ENCODE measurements at regions of chr5 and their contacts with region 1.

Region 1: DNA sequence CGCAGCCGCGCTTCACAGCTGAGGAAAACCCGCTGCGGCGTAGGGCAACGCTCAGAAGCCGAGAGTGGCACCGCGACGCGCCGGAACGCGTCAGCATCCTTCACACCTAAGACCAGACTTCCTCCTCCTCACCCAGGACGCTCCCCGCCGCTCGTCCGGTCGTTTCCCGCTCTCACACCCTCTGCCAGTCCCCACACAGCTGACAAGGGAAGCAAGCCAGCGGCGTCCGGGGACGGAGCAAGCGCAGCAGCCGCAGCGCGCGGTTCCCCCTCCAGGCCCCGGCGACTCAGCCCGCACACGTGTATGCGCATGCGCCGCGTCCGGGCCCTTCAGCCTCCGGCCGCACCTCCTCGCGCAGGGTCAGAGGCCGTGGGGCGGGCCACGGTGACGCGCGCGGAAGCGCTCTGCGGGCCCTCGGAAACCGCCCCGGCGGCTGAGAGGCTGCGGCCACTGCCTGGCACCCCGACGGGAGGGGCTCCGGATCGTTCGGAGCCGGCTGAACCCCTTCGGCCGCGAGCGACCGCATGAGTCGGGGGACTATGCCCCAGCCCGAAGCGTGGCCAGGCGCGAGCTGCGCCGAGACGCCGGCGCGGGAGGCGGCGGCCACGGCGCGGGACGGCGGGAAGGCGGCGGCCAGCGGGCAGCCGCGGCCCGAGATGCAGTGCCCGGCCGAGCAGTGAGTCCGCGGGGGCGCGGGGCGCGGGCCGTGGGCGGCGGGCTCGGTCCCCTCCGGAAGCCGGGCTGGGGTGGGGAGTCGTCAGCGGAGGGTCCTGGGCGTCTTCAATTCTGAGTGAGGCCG is at the start of gene OTULIN:
- DNase-seq: peak; percentile 93
- ATAC-seq: peak; percentile 83
- H3K4me3 Mint-ChIP-seq: peak within 1 kb of the TSS; percentile 95
- H3K27ac Mint-ChIP-seq: peak within 1 kb of the TSS; percentile 97
- H3K4me1 Mint-ChIP-seq: peaks cover 68% of the 10 kb centered on the region
- H3K27me3 Mint-ChIP-seq: no peaks in the 10 kb centered on the region
- total RNA-seq, gene OTULIN: 48.0 to 48.2 TPM

Region 2: DNA sequence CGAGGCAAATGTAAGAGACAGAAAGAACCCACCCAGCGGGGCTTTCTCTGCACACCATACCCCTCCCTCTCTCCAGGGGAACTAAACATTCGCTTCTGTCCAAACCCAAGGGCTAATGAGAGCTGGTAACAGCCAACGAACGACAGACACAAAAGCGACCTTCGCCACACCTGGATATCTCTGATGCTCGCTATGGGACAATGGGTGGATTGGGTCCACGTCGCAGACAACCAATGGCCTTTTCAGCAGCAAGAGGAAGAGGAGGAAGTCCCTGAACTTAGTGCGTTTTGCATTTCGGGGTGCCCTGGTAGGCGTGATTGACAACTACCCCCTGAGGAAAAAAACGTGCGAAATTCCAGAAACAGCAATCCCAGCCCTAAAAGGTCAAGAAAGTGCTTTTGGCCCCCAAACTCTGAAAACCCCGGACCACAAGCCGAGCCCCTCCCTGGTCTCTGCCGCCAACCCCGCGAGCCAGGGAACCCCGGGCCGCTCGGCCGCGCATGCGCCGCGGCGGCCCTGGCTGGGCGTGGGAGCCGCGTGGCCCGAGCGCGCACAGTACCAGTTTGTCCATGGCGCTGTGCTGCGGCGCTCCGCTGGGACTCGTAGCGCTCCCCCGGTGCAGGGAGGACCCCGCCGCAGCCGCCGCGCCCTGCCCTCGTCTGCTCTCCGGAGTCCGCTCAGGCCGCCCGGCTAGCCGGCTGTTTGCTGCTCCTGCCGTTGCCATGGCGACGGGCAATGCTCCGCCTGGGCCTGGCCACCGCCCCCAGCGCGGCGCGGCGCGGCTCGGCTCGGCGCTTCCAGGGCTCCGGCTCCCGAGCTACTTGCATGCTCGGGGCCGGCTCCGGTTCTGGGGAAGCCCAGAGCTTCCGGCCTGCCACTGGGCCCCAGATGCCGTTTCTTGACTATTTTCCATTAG is 653.2 kb before region 1 on chr5:
- CTCF ChIA-PET with region 1: no interaction called
- POLR2A ChIA-PET with region 1: no interaction called
- intact Hi-C with region 1: loop called in 1 of 2 experiments (anchors 10 kb)
- DNase-seq: peak; percentile 77
- ATAC-seq: peak; percentile 95
- H3K4me3 Mint-ChIP-seq: peak overlapping the region; percentile 71
- H3K27ac Mint-ChIP-seq: no peak overlapping the region
- H3K4me1 Mint-ChIP-seq: peaks cover 8% of the 10 kb centered on the region
- H3K27me3 Mint-ChIP-seq: peaks cover 22% of the 10 kb centered on the region

Region 3: GRCh38 chr5:14415024-14415697 is 249.3 kb before region 1 on chr5:
- CTCF ChIA-PET with region 1: no interaction called
- POLR2A ChIA-PET with region 1: no interaction called
- intact Hi-C with region 1: loop called (anchors 1 to 5 kb)
- DNase-seq: peak; percentile 63
- ATAC-seq: peak; percentile 48
- H3K4me3 Mint-ChIP-seq: peak overlapping the region; percentile 44
- H3K27ac Mint-ChIP-seq: peak overlapping the region; percentile 92
- H3K4me1 Mint-ChIP-seq: peaks cover 53% of the 10 kb centered on the region
- H3K27me3 Mint-ChIP-seq: peaks cover 4% of the 10 kb centered on the region

Region 4: GRCh38 chr5:14595189-14595588 is 69.3 kb before region 1 on chr5:
- CTCF ChIA-PET with region 1: no interaction called
- POLR2A ChIA-PET with region 1: no interaction called
- intact Hi-C with region 1: loop called in 1 of 2 experiments (anchors 2 kb)
- DNase-seq: peak; percentile 52
- ATAC-seq: peak; percentile 71
- H3K4me3 Mint-ChIP-seq: peak overlapping the region; percentile 66
- H3K27ac Mint-ChIP-seq: peak overlapping the region; percentile 96
- H3K4me1 Mint-ChIP-seq: peaks cover 85% of the 10 kb centered on the region
- H3K27me3 Mint-ChIP-seq: no peaks in the 10 kb centered on the region

Region 5: GRCh38 chr5:14676320-14676719 is 11.8 kb after region 1 on chr5:
- CTCF ChIA-PET with region 1: interaction called, 12 read pairs
- POLR2A ChIA-PET with region 1: no interaction called
- intact Hi-C with region 1: no loop called
- DNase-seq: peak; percentile 52
- ATAC-seq: peak; percentile 61
- H3K4me3 Mint-ChIP-seq: peak overlapping the region; percentile 38
- H3K27ac Mint-ChIP-seq: peak overlapping the region; percentile 87
- H3K4me1 Mint-ChIP-seq: peaks cover 63% of the 10 kb centered on the region
- H3K27me3 Mint-ChIP-seq: no peaks in the 10 kb centered on the region

Region 6: DNA sequence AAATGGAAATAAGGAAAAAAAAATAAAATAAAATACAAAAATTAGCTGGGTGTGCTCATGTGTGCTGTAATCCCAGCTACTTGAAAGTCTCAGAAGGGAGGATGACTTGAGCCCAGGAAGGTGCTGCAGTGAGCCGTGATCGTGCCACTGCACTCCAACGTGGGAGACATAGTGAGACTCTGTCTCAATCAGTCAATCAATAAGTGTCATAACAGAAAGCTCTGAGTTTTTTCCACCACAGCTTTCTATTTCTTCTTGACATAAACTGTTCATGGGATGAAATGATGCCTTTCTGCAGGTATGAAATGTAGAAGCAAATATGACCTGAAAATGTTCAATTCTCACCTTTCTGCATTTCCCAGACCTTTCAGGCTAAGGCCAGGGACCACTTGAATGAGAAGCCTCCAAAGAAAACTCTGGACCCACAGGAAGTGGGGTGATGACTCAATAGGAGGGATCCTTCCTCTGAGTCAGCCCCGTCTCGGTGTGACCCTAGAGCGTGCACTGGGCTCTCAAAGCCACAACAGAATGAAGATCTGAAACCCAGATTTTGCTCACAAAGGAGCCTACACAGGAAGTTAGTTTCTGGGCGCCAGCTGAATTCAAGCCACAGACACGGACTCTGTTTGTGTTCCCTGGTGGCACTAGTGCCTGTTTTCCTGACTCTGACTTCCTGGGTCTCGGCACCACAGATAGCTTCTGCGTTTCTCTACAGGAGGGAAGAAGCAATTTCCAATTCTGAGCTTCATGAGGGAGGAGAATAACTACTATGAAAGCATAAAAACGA is 145.1 kb after region 1 on chr5:
- CTCF ChIA-PET with region 1: no interaction called
- POLR2A ChIA-PET with region 1: no interaction called
- intact Hi-C with region 1: loop called in 1 of 2 experiments (anchors 2 kb)
- DNase-seq: peak; percentile 87
- ATAC-seq: peak; percentile 96
- H3K4me3 Mint-ChIP-seq: peak overlapping the region; percentile 55
- H3K27ac Mint-ChIP-seq: peak overlapping the region; percentile 71
- H3K4me1 Mint-ChIP-seq: peaks cover 51% of the 10 kb centered on the region
- H3K27me3 Mint-ChIP-seq: no peaks in the 10 kb centered on the region

Region 7: GRCh38 chr5:16465544-16466466 is 1801.3 kb after region 1 on chr5 and contains the start of gene ZNF622:
- CTCF ChIA-PET with region 1: no interaction called
- POLR2A ChIA-PET with region 1: no interaction called
- intact Hi-C with region 1: loop called in 1 of 2 experiments (anchors 5 kb)
- DNase-seq: peak; percentile 92
- ATAC-seq: peak; percentile 80
- H3K4me3 Mint-ChIP-seq: peak within 1 kb of the TSS; percentile 99
- H3K27ac Mint-ChIP-seq: peak within 1 kb of the TSS; percentile 98
- H3K4me1 Mint-ChIP-seq: peaks cover 67% of the 10 kb centered on the region
- H3K27me3 Mint-ChIP-seq: no peaks in the 10 kb centered on the region
- total RNA-seq, gene ZNF622: 30.9 to 36.3 TPM

Measured in activated CD4-positive, alpha-beta T cell treated with anti-CD3 and anti-CD28 coated beads for 36 hours (primary cell).